Activated B cell treated with CpG ODN at 0.5 μM for 24 hours (primary cell): ENCODE measurements at regions of chr20 and their contacts with region 1.

Region 1: DNA sequence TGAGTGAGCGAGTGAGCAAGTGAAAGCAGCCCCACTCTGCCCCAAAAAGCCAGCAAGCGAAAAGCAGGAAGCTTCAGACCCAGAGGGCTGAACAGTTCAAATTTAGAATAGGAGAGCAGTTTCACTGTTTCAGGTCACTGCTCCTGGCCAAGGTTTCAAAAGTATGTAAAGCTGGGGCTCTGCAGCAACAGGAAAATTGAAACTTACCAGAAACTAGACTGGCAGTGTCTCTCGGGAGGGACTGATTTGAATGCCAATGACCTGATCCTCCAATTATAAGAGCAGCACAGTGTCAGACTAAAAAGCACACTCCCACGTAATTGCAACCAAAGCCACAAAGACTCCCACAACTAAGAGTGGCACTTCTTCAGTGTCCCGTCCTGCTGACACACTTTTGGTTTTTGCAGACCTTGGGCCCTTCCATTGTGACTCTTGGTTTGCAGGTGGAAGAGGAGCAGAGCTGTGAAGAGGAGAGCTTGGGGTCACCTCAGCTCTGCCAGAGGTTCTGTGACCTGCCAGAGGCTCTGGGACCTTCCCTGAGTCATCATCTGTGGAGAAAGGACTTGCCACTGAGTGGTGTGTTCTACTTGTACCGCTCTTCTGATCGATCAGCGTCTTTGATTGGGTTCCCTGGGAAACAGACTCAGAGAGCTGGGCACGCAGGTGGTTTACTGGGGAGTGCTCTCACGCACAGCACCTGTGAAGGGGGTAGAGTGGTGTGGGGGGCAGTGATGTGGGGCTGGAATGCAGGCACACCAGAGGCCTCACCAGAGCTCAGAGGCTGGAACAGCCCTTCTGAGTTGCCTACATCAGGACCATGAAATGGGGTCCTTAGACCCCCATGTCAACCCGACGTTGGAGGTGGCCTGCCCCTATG is 52.7 kb upstream of the PTGIS start:
- DNase-seq: peak; percentile 42
- ATAC-seq: peak; percentile 87
- H3K4me3 Mint-ChIP-seq: no peak overlapping the region
- H3K27ac Mint-ChIP-seq: no peak overlapping the region
- H3K4me1 Mint-ChIP-seq: peaks cover 14% of the 10 kb centered on the region
- H3K27me3 Mint-ChIP-seq: peaks cover 3% of the 10 kb centered on the region
- CTCF ChIP-seq: no peak

Region 2: GRCh38 chr20:49631061-49631788 is 10.6 kb after region 1 on chr20:
- CTCF ChIA-PET with region 1: no interaction called
- POLR2A ChIA-PET with region 1: interaction called, 17 read pairs
- intact Hi-C with region 1: loop called (anchors 1 kb)
- DNase-seq: no peak
- ATAC-seq: peak; percentile 32
- H3K4me3 Mint-ChIP-seq: peak overlapping the region; percentile 32
- H3K27ac Mint-ChIP-seq: peak overlapping the region; percentile 62
- H3K4me1 Mint-ChIP-seq: peaks cover 56% of the 10 kb centered on the region
- H3K27me3 Mint-ChIP-seq: peaks cover 1% of the 10 kb centered on the region
- CTCF ChIP-seq: no peak

Region 3: DNA sequence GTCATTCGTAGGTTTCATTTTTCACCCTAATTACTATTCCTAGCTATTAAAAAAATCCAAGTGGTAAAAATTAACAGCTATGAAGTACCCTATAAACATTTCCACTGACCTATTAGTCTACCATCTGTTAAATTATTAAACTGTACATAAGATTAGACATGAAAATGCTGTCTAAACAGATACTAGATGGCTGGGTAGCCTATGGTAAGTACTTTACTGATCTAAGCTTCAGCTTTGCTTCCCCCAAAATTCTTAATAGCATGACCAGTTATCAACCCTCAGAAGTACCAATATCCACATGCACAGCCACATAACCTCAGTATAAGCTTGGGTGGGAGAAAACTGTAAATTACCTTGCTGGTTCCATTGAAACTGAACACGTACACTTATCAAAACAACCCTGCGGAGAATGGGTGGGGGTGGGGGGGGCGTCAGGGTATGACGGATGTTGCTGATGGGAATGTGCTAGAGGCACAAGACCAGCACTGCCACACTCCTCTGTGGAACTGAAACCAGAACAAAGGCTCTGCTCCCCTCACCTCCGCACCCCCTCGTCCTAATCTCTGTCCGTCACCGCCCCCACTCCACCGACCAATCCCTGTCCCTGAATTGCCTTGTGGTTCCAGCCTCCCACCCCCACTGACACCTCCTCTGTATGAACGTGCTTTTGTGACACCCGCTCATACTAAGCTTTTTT is 47.7 kb after region 1 on chr20:
- CTCF ChIA-PET with region 1: no interaction called
- POLR2A ChIA-PET with region 1: interaction called, 3 read pairs
- intact Hi-C with region 1: loop called (anchors 1 kb)
- DNase-seq: peak; percentile 43
- ATAC-seq: peak; percentile 84
- H3K4me3 Mint-ChIP-seq: peak overlapping the region; percentile 68
- H3K27ac Mint-ChIP-seq: peak overlapping the region; percentile 66
- H3K4me1 Mint-ChIP-seq: peaks cover 65% of the 10 kb centered on the region
- H3K27me3 Mint-ChIP-seq: no peaks in the 10 kb centered on the region
- CTCF ChIP-seq: no peak

Region 4: DNA sequence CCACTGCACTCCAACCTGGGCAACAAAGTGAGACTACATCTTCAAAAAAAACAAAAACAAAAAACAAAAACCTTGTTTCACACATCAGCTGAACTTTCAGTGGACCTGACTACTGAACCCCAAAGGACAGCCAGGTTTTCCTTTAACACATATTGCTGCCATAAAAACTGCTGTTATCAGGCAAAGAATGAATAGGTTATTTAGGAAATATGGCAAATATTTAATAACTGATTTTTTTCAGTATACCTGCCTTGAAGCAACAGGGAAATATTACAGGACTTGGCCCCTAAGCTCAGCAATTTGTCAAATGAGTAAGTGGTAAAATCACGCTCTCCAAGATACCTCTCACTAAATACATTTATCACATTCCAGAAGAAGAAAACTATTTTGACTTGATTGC is 59.0 kb after region 1 on chr20:
- CTCF ChIA-PET with region 1: no interaction called
- POLR2A ChIA-PET with region 1: no interaction called
- intact Hi-C with region 1: no loop called
- DNase-seq: no peak
- ATAC-seq: no peak
- H3K4me3 Mint-ChIP-seq: no peak overlapping the region
- H3K27ac Mint-ChIP-seq: no peak overlapping the region
- H3K4me1 Mint-ChIP-seq: peaks cover 64% of the 10 kb centered on the region
- H3K27me3 Mint-ChIP-seq: no peaks in the 10 kb centered on the region
- CTCF ChIP-seq: no peak

Region 5: GRCh38 chr20:49699200-49699992 is 78.8 kb after region 1 on chr20:
- CTCF ChIA-PET with region 1: no interaction called
- POLR2A ChIA-PET with region 1: no interaction called
- intact Hi-C with region 1: loop called (anchors 1 kb)
- DNase-seq: no peak
- ATAC-seq: peak; percentile 96
- H3K4me3 Mint-ChIP-seq: peak overlapping the region; percentile 66
- H3K27ac Mint-ChIP-seq: peak overlapping the region; percentile 79
- H3K4me1 Mint-ChIP-seq: peaks cover 76% of the 10 kb centered on the region
- H3K27me3 Mint-ChIP-seq: no peaks in the 10 kb centered on the region
- CTCF ChIP-seq: no peak

Region 6: DNA sequence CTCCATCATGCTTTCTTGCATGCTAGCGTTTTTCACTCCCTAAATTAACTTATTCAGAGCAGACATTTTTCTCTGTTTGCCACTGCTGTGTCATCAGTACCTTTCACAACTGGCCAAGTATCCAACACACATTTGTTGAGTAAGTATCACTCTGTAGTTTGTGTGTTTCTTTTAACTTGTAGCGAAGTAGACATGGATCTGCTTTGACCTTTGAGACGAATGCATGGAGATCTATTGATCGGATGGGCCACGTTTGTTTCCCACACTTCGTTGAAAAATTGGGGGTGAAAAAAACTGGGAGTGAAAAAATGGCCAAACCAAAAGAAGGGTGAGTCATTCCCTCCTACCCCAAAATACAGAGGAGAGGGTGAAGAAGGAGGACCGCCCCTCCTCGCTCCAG is 179.1 kb after region 1 on chr20:
- CTCF ChIA-PET with region 1: no interaction called
- POLR2A ChIA-PET with region 1: interaction called, 29 read pairs
- intact Hi-C with region 1: loop called (anchors 1 kb)
- DNase-seq: no peak
- ATAC-seq: no peak
- H3K4me3 Mint-ChIP-seq: no peak overlapping the region
- H3K27ac Mint-ChIP-seq: no peak overlapping the region
- H3K4me1 Mint-ChIP-seq: peaks cover 68% of the 10 kb centered on the region
- H3K27me3 Mint-ChIP-seq: no peaks in the 10 kb centered on the region
- CTCF ChIP-seq: no peak

Region 7: GRCh38 chr20:49964964-49965780 is 344.6 kb after region 1 on chr20:
- CTCF ChIA-PET with region 1: no interaction called
- POLR2A ChIA-PET with region 1: no interaction called
- intact Hi-C with region 1: no loop called
- DNase-seq: no peak
- ATAC-seq: no peak
- H3K4me3 Mint-ChIP-seq: no peak overlapping the region
- H3K27ac Mint-ChIP-seq: no peak overlapping the region
- H3K4me1 Mint-ChIP-seq: peaks cover 2% of the 10 kb centered on the region
- H3K27me3 Mint-ChIP-seq: no peaks in the 10 kb centered on the region
- CTCF ChIP-seq: no peak